ENCODE measurements at regions of chr10 and their contacts with region 1.

Region 1: DNA sequence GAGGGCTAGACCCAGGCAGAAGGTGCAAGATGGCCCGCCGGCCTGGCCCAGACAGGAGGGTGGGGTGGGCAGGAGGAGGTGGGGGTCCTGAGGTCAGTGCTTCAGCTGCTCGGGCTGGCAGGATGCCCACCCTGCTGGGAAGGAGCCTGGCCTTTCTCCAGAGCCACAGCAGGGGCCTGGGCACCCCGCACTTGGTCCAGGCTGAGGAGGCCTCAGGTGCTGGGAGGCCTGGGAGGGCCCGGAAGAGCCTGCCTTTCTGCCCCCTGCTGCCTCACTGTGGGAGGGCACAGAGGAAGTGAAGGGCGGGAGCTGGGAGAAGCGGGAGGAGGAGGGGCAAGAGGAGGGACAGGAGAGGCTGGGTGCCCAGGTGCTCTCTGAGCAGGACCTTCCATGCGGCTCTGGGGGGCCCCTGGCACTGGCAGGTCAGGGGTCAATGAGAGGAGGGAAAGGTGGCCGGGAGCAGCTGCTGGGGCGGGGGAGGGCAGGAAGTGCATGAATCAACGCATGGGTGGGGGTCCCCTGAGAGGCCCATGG is 49.7 kb downstream of the PWWP2B start:
- DNase-seq: peak; percentile 90
- ATAC-seq: peak; percentile 76
- H3K4me3 Mint-ChIP-seq: peak overlapping the region; percentile 78
- H3K27ac Mint-ChIP-seq: peak overlapping the region; percentile 99
- H3K4me1 Mint-ChIP-seq: peaks cover 35% of the 10 kb centered on the region
- H3K27me3 Mint-ChIP-seq: no peaks in the 10 kb centered on the region

Region 2: GRCh38 chr10:131981429-131982184 is 465.1 kb before region 1 on chr10 and contains the start of gene BNIP3:
- CTCF ChIA-PET with region 1: no interaction called
- POLR2A ChIA-PET with region 1: no interaction called
- intact Hi-C with region 1: loop called in 1 of 2 experiments (anchors 5 kb)
- DNase-seq: peak; percentile 97
- ATAC-seq: peak; percentile 90
- H3K4me3 Mint-ChIP-seq: peak within 1 kb of the TSS; percentile 90
- H3K27ac Mint-ChIP-seq: peak within 1 kb of the TSS; percentile 79
- H3K4me1 Mint-ChIP-seq: peaks cover 36% of the 10 kb centered on the region
- H3K27me3 Mint-ChIP-seq: no peaks in the 10 kb centered on the region
- total RNA-seq, gene BNIP3: 200 to 256 TPM

Region 3: GRCh38 chr10:132193907-132194552 is 252.7 kb before region 1 on chr10:
- CTCF ChIA-PET with region 1: no interaction called
- POLR2A ChIA-PET with region 1: no interaction called
- intact Hi-C with region 1: no loop called
- DNase-seq: peak; percentile 52
- ATAC-seq: peak; percentile 47
- H3K4me3 Mint-ChIP-seq: no peak overlapping the region
- H3K27ac Mint-ChIP-seq: no peak overlapping the region
- H3K4me1 Mint-ChIP-seq: no peaks in the 10 kb centered on the region
- H3K27me3 Mint-ChIP-seq: peaks cover 11% of the 10 kb centered on the region

Region 4: GRCh38 chr10:132229834-132230556 is 216.7 kb before region 1 on chr10:
- CTCF ChIA-PET with region 1: no interaction called
- POLR2A ChIA-PET with region 1: no interaction called
- intact Hi-C with region 1: loop called in 1 of 2 experiments (anchors 5 kb)
- DNase-seq: peak; percentile 65
- ATAC-seq: peak; percentile 59
- H3K4me3 Mint-ChIP-seq: peak overlapping the region; percentile 64
- H3K27ac Mint-ChIP-seq: peak overlapping the region; percentile 93
- H3K4me1 Mint-ChIP-seq: peaks cover 34% of the 10 kb centered on the region
- H3K27me3 Mint-ChIP-seq: no peaks in the 10 kb centered on the region

Region 5: DNA sequence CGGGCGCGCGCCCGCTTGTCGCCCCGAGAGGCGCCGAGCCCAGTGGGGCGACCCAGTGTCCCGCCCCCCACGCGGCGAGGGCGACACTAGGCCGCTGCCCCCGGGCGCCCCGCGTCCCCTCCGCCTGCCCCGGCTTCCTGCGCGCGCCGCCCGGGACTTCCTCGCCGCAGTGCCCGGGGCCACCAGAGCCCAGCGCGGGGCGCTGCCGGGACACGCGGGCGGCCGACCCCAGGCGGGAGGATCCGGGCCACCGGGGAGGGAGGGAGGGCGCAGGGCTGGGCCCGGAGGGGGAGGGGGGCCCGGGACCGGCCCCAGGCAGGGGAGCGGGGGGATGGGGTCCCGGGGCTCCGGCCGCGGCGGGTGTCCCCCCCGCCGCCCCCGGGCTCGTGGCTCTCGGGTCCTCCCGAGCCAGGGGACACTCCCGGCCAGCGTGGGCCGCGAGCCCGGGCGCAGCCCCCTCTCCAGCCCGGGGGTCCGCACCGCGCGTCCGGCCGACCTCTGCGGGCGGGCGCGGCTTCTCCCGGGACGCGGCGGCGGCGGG is 50.2 kb before region 1 on chr10:
- CTCF ChIA-PET with region 1: interaction called, 6 read pairs
- POLR2A ChIA-PET with region 1: interaction called, 3 read pairs
- intact Hi-C with region 1: loop called (anchors 1 to 2 kb)
- DNase-seq: peak; percentile 78
- ATAC-seq: peak; percentile 75
- H3K4me3 Mint-ChIP-seq: no peak overlapping the region
- H3K27ac Mint-ChIP-seq: no peak overlapping the region
- H3K4me1 Mint-ChIP-seq: peaks cover 13% of the 10 kb centered on the region
- H3K27me3 Mint-ChIP-seq: no peaks in the 10 kb centered on the region

Region 6: DNA sequence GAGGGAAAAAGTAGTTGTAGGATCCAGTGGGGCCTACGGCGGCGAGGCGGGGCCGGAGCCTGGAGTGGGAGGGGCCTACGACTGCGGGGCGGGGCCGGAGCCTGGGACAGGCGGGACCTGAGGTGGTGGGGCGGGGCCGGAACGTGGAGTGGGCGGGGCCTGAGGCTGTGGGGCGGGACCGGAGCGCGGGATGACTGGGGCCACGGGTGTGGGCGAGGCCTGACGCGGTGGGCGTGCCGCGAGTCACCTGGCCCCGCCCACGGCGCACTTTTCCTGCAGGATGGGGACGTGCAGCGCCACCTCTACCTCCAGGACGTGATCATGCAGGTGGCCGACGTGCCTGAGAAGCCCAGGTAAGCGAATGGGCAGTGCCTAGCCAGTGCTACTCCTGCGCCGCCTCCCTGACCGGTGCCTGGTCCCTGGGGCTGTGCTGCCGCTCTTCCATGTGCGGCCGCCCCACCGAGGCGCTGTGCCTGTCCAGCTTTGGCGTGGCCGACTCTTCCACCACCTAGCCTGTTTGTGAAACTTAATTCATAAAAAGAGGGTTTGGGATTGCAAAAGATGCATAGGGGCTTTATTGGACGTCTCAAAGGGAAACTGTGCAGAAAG is 862.5 kb after region 1 on chr10:
- CTCF ChIA-PET with region 1: no interaction called
- POLR2A ChIA-PET with region 1: no interaction called
- intact Hi-C with region 1: no loop called
- DNase-seq: peak; percentile 97
- ATAC-seq: peak; percentile 84
- H3K4me3 Mint-ChIP-seq: peak overlapping the region; percentile 100
- H3K27ac Mint-ChIP-seq: peak overlapping the region; percentile 69
- H3K4me1 Mint-ChIP-seq: peaks cover 30% of the 10 kb centered on the region
- H3K27me3 Mint-ChIP-seq: no peaks in the 10 kb centered on the region

Measured in activated CD4-positive, alpha-beta T cell treated with anti-CD3 and anti-CD28 coated beads for 36 hours (primary cell).